ENCODE measurements at regions of chr2 and their contacts with region 1.

Region 1: GRCh38 chr2:238263204-238264071 is 23.6 kb upstream of the HES6 start:
- DNase-seq: peak; percentile 95
- ATAC-seq: peak; percentile 91

Region 2: GRCh38 chr2:237858294-237859081 is 404.9 kb before region 1 on chr2:
- intact Hi-C with region 1: loop called (anchors 5 kb)
- DNase-seq: peak; percentile 67
- ATAC-seq: peak; percentile 77

Region 3: GRCh38 chr2:238060542-238061314 is 202.7 kb before region 1 on chr2 and contains the start of gene SCLY:
- intact Hi-C with region 1: loop called (anchors 10 kb)
- DNase-seq: peak; percentile 97
- ATAC-seq: peak; percentile 99
- total RNA-seq, gene SCLY: 8.6 TPM

Region 4: GRCh38 chr2:238127317-238128200 is 135.9 kb before region 1 on chr2:
- intact Hi-C with region 1: no loop called
- DNase-seq: peak; percentile 46
- ATAC-seq: peak; percentile 62

Region 5: DNA sequence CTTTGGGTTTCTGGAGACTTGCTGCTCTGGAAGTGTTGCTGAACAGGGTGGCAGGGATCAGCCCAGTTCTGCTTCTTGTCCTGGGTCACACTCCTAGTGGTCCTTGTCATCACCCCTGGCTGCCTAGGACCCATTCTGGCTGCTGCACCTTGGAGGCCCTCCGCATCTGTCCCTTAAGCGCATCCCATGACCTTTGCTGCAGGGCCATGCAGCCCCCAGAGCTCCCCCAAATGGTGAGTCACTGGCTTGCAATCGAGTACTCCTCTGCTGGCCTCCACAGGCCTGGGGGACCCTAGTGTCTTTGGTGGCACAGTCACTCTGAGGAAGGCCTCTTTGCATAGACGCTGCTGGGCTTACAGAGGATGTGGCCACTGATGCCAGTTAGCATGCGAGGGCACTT is 351.7 kb after region 1 on chr2:
- intact Hi-C with region 1: no loop called
- DNase-seq: no peak
- ATAC-seq: no peak

Region 6: DNA sequence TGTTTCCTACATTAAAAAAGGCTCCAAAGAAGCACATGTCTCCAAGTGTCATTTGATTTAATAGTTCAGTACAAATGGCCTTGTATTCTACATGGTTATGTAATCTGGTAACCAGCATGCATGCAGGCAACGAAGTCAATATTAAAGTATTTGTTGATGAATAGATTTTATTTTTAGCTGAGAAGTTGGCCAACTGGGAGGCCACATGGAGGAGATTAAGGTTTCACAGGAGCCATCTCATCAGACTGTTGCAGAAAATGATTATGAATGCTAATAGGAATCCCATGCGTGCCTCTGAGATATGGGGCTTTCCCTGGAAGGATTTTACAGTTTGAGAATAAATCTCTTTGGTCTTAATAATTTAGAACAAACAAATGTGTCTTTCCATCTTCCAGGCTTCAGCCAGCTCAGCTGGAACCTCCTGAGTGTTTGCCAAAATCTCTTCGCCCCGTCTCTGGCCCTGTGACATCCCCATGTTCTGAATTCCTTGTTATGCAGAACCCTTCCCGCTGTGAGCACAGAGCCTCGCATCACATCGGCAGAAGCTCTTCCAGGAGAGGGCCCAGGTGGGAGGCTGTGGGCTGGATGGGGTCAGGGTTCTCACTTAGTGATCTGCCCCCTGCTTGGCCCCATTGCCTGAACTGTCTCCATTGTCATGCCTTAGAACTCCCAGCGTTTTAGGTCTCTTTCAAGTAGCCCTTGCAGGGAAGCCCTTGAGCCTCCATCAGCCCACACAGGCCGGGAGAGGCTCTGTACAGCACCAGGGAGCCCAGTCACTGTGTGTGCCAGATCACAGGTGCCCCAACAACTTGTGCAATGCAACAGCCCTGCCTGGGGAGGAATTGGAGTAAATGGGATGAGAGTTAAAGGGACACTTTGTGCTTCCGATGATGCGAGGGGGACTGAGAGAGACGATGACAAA is 394.0 kb after region 1 on chr2:
- intact Hi-C with region 1: no loop called
- DNase-seq: no peak
- ATAC-seq: no peak

Measured in Right ventricle myocardium superior (tissue), 1 donor.